ENCODE measurements at regions of chr15 and their contacts with region 1.

Region 1: GRCh38 chr15:66700802-66701421 is 1.1 kb upstream of the SMAD6 start:
- DNase-seq: peak; percentile 86
- ATAC-seq: peak; percentile 85
- H3K4me3 Mint-ChIP-seq: peak overlapping the region; percentile 78
- H3K27ac Mint-ChIP-seq: peak overlapping the region; percentile 75
- H3K4me1 Mint-ChIP-seq: peaks cover 17% of the 10 kb centered on the region
- H3K27me3 Mint-ChIP-seq: peaks cover 28% of the 10 kb centered on the region

Region 2: DNA sequence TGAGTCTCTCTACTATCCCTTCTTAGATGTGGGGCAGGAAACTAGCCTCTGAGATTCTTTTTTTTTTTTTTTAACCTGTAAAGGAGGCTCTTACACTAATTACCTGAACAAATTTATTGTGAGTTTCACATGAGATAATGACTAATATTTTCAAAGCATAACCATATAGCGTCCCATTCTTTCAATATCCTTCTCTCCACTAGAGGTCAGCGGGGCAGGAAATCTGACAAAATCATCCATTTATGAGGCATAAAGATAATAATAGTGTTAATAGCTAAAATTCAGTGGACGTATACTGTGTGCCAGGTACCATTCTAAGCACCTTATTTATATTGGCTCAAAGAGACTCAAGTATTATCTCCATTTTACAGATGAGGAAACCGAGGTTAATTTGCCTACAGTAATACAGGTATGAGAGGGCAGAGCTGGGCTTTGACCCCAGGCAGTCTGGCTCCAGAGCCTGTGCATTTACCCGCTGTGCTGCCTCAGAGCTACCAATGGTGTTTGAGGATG is 15.2 kb before region 1 on chr15:
- CTCF ChIA-PET with region 1: interaction called, 11 read pairs
- DNase-seq: no peak
- ATAC-seq: no peak
- H3K4me3 Mint-ChIP-seq: no peak overlapping the region
- H3K27ac Mint-ChIP-seq: no peak overlapping the region
- H3K4me1 Mint-ChIP-seq: no peaks in the 10 kb centered on the region
- H3K27me3 Mint-ChIP-seq: no peaks in the 10 kb centered on the region

Measured in activated CD8-positive, alpha-beta memory T cell treated with anti-CD3 and anti-CD28 coated beads, Interleukin-2, amount 10 ng/mL, durations not matched to agents 7 days and 5 days (primary cell).